Right ventricle myocardium superior (tissue), 1 donor: ENCODE measurements at regions of chr17 and their contacts with region 1.

Region 1: DNA sequence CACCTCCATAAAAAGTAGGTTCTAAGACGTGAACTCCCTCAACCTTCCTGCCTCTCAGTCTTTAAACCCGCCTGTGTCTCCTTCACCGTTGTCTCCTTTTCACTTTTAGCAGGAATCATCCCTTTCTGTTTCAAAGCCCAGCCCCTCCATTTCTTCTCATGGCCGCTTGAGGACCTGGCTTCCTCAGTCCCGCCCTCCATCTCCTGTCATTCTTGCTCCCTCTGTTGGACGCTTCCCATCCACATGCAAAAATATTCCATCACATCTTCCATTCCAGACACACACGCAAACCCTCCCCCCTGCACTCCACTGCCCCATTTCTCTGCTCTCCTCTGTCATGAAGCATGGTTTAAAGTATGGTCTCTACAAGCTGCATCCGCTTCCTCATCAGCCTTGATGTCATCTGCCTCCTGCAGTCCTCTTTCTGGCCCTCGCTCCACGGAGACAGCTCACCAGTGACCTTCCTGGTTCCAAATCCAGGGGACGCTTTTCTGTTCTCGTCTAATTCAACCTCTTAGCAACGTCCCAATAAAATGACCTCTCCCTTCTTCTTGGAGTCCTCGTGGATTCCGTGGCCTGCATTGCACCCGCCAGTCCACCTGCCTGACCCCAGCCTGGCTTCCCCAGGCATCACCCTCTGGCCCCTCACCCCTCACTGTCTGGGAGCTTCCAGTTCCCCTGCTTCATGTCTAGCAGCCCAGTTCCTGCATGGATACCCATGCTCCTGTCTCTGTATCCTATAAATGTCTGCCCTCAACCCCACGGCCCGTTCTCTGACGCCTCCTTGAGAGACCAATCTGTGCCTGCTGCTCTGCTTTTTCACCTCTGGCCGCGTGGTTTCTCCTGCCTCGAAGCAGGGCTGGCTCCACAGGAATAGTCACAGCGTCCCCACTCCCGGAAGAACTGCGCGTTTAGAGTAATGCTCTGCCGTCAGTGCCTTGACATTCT is 26.2 kb downstream of the ANKRD40 start:
- DNase-seq: no peak
- ATAC-seq: peak; percentile 80

Region 2: GRCh38 chr17:50626037-50626574 is 55.4 kb before region 1 on chr17:
- intact Hi-C with region 1: loop called (anchors 2 kb)
- DNase-seq: peak; percentile 85
- ATAC-seq: peak; percentile 88